A673 (cell line): ENCODE measurements at regions of chr9 and their contacts with region 1.

Region 1: GRCh38 chr9:129559506-129559881 is 61.4 kb downstream of the C9orf50 start:
- DNase-seq: no peak
- H3K4me3 ChIP-seq: no peak overlapping the region
- H3K27ac ChIP-seq: no peak overlapping the region
- H3K4me1 ChIP-seq: peaks cover 17% of the 10 kb centered on the region
- H3K27me3 ChIP-seq: no peaks in the 10 kb centered on the region
- CTCF ChIP-seq: no peak

Region 2: DNA sequence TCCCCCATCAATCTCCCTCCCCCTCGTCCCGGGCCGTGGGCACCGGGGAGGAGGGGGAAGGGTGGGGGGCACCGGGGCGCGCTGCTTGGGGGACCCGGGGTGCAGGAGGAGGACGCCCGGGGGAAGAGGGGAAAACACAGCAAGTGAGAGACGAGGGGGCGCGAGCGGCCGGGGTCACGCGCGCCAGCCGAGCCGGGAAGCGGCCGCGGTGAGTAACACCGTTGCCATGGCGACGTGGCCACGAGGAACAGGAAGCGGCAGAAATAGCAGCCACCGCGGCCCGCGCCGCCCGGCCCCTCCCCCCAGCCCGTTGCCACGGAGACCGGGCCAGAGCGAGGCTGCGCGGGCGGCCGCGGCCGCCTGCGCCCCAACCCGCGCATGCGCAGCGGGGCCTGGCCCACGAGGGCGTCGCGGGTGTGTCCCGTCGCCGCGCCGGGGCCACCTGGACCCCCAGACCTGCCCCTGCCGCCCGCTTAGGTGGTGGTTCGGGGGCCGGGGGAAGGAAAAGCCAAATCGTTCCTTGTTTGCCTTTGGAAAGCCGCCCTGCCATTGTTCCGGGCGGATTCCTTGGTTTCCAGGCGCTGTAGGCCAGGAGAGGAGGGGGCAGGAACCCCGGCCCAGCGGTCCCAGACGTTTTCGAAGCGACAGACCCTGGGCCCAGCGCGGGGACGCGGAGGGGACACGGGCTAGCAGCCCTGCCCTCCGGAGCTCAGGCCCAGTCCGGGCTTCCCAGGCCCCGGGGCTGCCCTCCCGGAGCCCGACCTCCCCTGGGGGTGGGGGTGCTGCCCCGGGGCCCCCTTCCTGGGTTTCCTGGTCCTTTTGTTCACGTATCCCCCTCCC is 145.7 kb before region 1 on chr9:
- CTCF ChIA-PET with region 1: no interaction called
- POLR2A ChIA-PET with region 1: no interaction called
- intact Hi-C with region 1: no loop called
- DNase-seq: peak; percentile 97
- H3K4me3 ChIP-seq: peak overlapping the region; percentile 47
- H3K27ac ChIP-seq: peak overlapping the region; percentile 91
- H3K4me1 ChIP-seq: peaks cover 16% of the 10 kb centered on the region
- H3K27me3 ChIP-seq: no peaks in the 10 kb centered on the region
- CTCF ChIP-seq: no peak

Region 3: GRCh38 chr9:129585352-129585751 is 25.9 kb after region 1 on chr9:
- CTCF ChIA-PET with region 1: no interaction called
- POLR2A ChIA-PET with region 1: interaction called, 15 read pairs
- intact Hi-C with region 1: no loop called
- DNase-seq: no peak
- H3K4me3 ChIP-seq: no peak overlapping the region
- H3K27ac ChIP-seq: no peak overlapping the region
- H3K4me1 ChIP-seq: peaks cover 13% of the 10 kb centered on the region
- H3K27me3 ChIP-seq: no peaks in the 10 kb centered on the region
- CTCF ChIP-seq: no peak